AG04450 (cell line): ENCODE measurements at regions of chr22 and their contacts with region 1.

Region 1: GRCh38 chr22:37244114-37244921 is at the start of gene RAC2:
- DNase-seq: no peak
- H3K4me3 ChIP-seq: peak within 1 kb of the TSS; percentile 60
- H3K27ac ChIP-seq: no peak within 1 kb of the TSS
- H3K27me3 ChIP-seq: no peaks in the 10 kb centered on the region
- CTCF ChIP-seq: no peak
- polyA plus RNA-seq, gene RAC2: 25.0 and 35.9 TPM in 2 replicates

Region 2: DNA sequence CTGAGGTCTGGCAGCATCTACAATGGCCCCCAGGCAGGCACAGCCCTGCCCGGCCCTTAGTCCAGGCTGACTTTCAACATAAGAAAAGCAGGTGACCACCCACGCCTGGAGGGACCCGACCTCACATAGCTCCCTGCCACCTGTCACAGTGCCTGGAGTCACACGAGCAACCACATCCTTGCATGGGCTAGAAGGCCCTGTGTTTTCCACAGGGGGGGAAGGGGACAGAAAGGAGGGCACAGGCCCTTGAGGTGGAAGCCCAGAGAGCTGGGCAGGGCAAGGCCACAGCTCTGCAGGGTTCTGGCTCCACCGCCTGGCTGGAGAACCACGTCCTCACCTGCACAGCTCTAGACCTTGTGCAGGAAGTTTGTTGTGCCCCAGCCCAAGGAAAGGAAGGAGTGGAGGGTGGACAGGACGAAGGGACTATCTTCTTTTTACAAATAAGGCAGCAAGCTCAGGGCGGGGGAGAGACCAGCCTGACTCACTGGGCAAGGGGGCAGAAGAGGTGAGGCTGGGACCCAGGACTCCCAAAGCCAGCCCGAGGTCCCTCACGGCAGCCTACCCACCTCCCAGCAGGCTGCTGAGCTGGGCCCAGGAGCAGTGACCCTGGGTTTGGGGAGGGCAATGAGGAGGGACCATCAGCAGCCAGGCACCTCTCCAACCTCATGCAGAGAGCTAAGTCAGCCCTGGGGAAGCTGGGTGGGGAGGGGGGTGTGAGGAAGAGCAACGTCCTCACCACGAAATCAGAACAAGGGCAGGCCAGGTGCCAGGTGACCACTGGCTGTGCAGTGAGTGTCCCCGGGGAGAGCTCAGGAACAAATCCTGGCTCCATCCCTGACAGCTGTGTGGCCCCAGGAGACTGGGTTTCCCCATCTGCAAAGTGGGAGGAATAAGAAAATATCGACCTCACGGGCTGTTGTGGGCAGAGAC is 60.6 kb before region 1 on chr22:
- CTCF ChIA-PET with region 1: no interaction called
- POLR2A ChIA-PET with region 1: interaction called, 10 read pairs
- DNase-seq: no peak
- H3K4me3 ChIP-seq: no peak overlapping the region
- H3K27ac ChIP-seq: no peak overlapping the region
- H3K27me3 ChIP-seq: no peaks in the 10 kb centered on the region
- CTCF ChIP-seq: no peak

Region 3: GRCh38 chr22:37218771-37219411 is 25.4 kb before region 1 on chr22:
- CTCF ChIA-PET with region 1: no interaction called
- POLR2A ChIA-PET with region 1: no interaction called
- DNase-seq: no peak
- H3K4me3 ChIP-seq: no peak overlapping the region
- H3K27ac ChIP-seq: no peak overlapping the region
- H3K27me3 ChIP-seq: peaks cover 31% of the 10 kb centered on the region
- CTCF ChIP-seq: no peak